Endothelial cell of umbilical vein (primary cell): ENCODE measurements at regions of chr12 and their contacts with region 1.

Region 1: GRCh38 chr12:51368640-51369517 is 22.3 kb downstream of the GALNT6 start:
- DNase-seq: peak; percentile 74
- H3K4me3 ChIP-seq: no peak overlapping the region
- H3K27ac ChIP-seq: peak overlapping the region; percentile 91
- H3K4me1 ChIP-seq: peaks cover 41% of the 10 kb centered on the region
- H3K27me3 ChIP-seq: no peaks in the 10 kb centered on the region
- CTCF ChIP-seq: no peak
- POLR2A ChIP-seq: peak; percentile 56

Region 2: GRCh38 chr12:51351913-51352532 is 16.9 kb before region 1 on chr12:
- CTCF ChIA-PET with region 1: interaction called, 11 read pairs
- POLR2A ChIA-PET with region 1: no interaction called
- dilution Hi-C with region 1: no loop called
- intact Hi-C with region 1: no loop called
- DNase-seq: peak; percentile 66
- H3K4me3 ChIP-seq: no peak overlapping the region
- H3K27ac ChIP-seq: no peak overlapping the region
- H3K4me1 ChIP-seq: no peaks in the 10 kb centered on the region
- H3K27me3 ChIP-seq: no peaks in the 10 kb centered on the region
- CTCF ChIP-seq: peak; percentile 66 to 80
- POLR2A ChIP-seq: peak; percentile 24

Region 3: DNA sequence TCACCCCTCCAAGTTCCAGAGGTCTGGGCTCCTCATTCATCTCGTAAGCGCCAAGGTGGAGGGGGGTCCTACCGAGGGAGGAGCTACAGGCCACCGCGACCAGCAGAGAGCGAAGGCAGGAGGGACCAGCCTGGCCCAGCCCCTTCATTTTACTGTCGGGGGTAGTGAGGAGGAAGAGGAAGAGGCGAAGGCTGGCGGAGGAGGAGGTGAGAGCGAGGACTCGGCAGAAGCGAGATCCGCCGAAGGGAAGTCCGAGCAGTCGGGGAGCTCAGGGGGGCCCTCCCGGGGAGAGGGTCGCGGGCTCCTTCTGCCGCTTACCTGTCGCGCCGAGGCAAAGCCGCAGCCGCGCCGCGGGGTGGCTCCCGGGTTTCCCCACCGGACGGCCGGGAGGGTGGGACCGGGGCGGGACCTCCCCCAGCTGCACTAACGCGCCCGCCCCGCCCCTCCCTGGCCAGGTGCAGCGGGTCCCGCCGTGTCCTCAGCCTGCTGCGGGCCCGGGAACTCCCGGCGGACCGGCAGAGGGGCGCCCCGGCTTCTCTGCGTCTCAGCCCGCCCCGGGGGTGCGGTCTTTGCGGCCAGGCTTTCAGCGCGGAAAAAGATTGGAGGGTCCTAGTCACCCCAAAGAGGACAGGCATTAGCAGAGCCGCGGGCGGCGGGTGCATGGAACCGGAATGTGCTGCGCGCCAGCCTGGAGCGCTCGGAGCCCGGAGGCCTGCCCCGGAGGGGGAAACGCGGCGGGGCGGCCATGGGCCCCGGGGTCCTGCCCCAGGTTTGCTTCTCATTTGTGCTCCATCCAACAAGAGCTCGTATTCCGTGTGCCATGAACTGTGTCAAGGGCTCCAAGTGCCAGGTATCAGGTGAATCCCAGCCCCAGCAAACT is 22.6 kb after region 1 on chr12 and contains the start of gene GALNT6:
- CTCF ChIA-PET with region 1: interaction called, 15 read pairs
- POLR2A ChIA-PET with region 1: interaction called, 8 read pairs
- dilution Hi-C with region 1: no loop called
- intact Hi-C with region 1: loop called (anchors 1 kb)
- DNase-seq: peak; percentile 29
- H3K4me3 ChIP-seq: peak within 1 kb of the TSS; percentile 66 to 72 (median 71)
- H3K27ac ChIP-seq: peak within 1 kb of the TSS; percentile 67
- H3K4me1 ChIP-seq: peaks cover 43% of the 10 kb centered on the region
- H3K27me3 ChIP-seq: no peaks in the 10 kb centered on the region
- CTCF ChIP-seq: no peak
- POLR2A ChIP-seq: no peak
- total RNA-seq, gene GALNT6: 38.3 and 39.2 TPM in 2 replicates

Region 4: DNA sequence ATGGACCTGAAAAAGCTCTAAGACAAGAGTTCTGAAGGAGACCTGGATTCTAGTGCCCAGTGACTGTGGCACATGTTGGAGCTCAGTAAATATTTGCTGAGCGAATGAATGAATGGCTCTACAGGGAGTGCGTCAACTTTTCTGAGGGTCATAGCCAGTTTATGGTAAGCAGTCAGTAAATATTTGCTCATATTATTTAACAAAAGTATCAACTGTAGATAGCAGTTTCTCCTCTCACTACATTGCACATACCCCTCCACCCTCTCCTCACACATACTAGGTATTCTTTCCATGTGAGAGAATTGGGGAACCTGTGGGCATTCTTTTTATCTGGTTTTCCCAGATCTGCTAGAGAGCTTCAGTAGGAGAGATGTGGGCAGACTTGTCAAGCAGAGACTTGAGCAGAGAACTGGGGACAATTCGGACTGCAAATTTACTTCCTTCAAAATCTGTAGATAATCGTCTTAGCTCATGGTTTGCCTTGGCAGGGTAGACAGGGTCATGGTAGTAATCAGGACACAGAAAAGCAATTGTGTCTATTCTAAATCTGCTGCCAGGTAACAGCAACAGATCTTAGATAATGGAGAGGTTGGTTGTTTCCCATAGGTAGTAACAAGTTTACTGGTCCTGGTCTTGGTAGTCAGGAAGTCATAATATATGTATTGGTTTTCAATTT is 61.5 kb after region 1 on chr12:
- CTCF ChIA-PET with region 1: no interaction called
- POLR2A ChIA-PET with region 1: no interaction called
- dilution Hi-C with region 1: no loop called
- intact Hi-C with region 1: no loop called
- DNase-seq: no peak
- H3K4me3 ChIP-seq: no peak overlapping the region
- H3K27ac ChIP-seq: no peak overlapping the region
- H3K4me1 ChIP-seq: peaks cover 3% of the 10 kb centered on the region
- H3K27me3 ChIP-seq: peaks cover 0 to 1% of the 10 kb centered on the region in 2 experiments
- CTCF ChIP-seq: no peak
- POLR2A ChIP-seq: no peak